Stomach (tissue), 19 donors: ENCODE measurements at regions of chr7 and their contacts with region 1.

Region 1: DNA sequence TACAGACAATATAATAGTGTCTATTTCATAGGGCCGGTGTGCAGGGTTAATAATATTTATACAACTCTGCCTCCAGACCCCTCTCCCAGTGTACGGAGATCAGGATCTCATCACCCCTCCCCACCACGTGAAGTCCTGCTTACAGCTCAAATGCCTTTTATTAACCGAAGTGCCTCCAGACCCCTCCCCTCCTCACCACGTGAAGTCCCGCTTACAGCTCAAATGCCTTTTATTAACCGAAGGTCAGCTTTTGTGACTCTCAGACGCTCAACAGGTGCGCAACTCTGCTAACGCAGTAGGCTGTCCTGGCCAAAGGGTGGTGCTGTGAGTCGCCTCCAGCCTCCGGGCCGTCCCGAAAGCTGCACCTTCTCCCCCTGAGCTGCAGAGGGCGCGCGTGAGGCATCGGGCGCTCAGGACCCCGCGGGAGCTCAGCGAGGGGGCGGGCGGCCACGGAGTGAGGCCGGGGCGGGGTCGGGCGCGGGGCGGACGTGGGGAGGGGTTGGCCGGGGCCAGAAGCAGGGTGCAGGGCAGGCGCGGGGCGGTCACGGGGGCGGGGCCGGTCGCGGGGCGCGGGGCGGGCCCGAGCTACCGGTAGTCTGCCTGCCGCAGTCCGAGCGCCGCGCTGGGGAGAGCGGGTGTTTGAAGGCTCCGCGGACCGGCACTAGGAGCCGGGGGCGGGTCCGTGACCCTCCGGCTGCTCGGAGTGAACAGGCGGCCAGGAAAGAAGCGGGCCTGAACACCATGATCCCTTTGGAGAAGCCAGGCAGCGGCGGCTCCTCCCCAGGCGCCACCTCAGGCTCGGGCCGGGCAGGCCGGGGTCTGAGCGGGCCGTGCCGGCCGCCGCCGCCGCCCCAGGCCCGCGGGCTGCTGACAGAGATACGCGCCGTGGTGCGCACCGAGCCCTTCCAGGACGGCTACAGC is at the start of gene STK17A:
- DNase-seq: peak; percentile 95 to 98
- H3K4me3 ChIP-seq: peak within 1 kb of the TSS; percentile 63 to 98 (median 94)
- H3K27ac ChIP-seq: peak within 1 kb of the TSS; percentile 92 to 99 (median 96)
- H3K4me1 ChIP-seq: peaks cover 17 to 41% (median 30%) of the 10 kb centered on the region in 4 donors
- H3K27me3 ChIP-seq: peaks cover 0 to 9% (median 0%) of the 10 kb centered on the region in 3 donors
- CTCF ChIP-seq: peak in 5 of 7 experiments; percentile 99 to 100 (median 100)
- EP300 ChIP-seq: no peak
- POLR2A ChIP-seq: no peak
- total RNA-seq, gene STK17A: 18.5 to 33.0 (median 30.8) TPM

Region 2: GRCh38 chr7:42805622-42806021 is 777.1 kb before region 1 on chr7:
- intact Hi-C with region 1: no loop called
- DNase-seq: no peak
- H3K4me3 ChIP-seq: no peak overlapping the region
- H3K27ac ChIP-seq: no peak overlapping the region
- H3K4me1 ChIP-seq: no peaks in the 10 kb centered on the region
- H3K27me3 ChIP-seq: no peaks in the 10 kb centered on the region
- CTCF ChIP-seq: no peak
- EP300 ChIP-seq: no peak
- POLR2A ChIP-seq: no peak

Region 3: DNA sequence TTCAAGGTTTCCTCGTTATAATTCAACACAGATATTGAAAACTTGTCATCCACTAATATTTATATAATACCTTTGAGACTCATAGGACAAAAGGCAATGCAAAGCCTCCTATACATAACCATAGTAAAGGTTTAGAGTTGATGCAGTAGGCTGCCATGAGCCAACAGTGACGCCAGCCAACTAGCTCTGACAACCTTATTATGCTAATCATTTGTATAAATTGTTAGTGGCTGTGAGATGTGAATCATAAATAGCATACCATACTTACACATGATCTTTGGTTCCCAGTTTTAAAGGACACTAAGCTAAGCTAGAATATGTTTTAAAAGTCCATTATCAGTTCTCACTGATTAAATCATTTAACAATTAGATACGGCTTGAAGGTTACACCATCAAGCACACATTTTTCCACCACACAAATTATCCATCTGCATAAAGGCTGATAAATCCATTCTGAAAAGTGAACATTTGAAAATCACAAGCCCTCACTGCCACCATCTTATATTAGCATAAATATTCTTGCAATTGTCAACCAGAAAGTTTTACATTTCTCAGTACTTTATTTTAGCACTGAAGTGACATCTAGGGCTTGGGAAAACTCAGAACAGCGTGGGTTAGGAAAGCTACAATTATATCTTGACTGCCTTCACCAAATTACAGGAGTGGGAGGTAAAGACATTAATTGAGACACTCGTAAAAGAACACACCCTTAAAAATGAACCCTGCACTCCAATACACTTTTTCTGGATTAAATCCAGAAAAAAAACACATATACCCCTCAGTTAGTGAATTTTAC is 115.9 kb after region 1 on chr7:
- intact Hi-C with region 1: loop called (anchors 5 kb)
- DNase-seq: no peak
- H3K4me3 ChIP-seq: no peak overlapping the region
- H3K27ac ChIP-seq: no peak overlapping the region
- H3K4me1 ChIP-seq: peaks cover 0 to 45% (median 4%) of the 10 kb centered on the region in 4 donors
- H3K27me3 ChIP-seq: no peaks in the 10 kb centered on the region
- CTCF ChIP-seq: no peak
- EP300 ChIP-seq: no peak
- POLR2A ChIP-seq: no peak

Region 4: DNA sequence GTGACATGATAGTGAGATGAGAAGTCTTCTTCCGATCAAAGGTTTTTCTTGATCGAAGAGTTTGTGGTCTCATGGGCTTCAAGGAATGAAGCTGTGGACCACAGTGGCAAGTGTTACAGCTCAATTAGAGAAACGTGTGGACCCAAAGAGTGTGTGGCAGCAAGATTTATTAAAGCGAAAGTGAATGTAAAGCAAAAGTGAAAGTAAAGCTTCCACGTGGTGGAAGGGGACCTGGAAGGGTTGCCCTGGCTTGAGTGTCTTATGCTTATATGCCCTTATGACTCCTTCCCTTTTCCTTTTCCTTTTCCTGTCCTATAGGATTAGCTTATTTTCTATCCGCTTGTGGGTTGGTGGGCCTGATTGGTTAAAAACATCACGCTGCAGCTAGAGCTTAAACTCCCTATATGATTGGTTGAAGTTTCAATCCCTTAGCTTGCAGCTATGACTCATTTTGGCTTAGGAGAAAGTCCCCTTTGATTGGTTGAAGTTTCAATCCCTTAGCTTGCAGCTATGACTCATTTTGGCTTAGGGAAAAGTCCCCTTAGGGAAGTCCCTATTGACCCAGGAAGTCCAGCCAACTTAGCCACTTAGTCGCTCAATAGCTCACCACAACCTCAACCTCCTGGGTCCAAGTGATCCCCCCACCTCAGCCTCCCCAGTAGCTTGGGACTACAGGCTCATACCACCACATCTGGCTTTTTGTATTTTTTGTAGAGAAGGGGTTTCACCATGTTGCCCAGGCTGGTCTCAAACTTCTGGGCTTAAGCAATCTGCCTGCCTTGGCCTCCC is 251.9 kb after region 1 on chr7:
- intact Hi-C with region 1: loop called (anchors 10 kb)
- DNase-seq: peak in 1 of 2 donors; percentile 55
- H3K4me3 ChIP-seq: peak overlapping the region; percentile 18 to 28 (median 24)
- H3K27ac ChIP-seq: peak overlapping the region in 1 of 5 donors; percentile 29
- H3K4me1 ChIP-seq: peaks cover 0 to 14% (median 6%) of the 10 kb centered on the region in 4 donors
- H3K27me3 ChIP-seq: peaks cover 0 to 6% (median 0%) of the 10 kb centered on the region in 3 donors
- CTCF ChIP-seq: no peak
- EP300 ChIP-seq: no peak
- POLR2A ChIP-seq: no peak